Activated T-helper 2 cell treated with anti-CD3 and anti-CD28 coated beads, Interferon-gamma antibody, Interleukin-2, Interleukin-4, amounts not matched to agents 10 μg/mL and 5 μg/mL and 100 μg/mL, durations not matched to agents 14 hours and 24 hours and 36 hours (primary cell): ENCODE measurements at regions of chr2 and their contacts with region 1.

Region 1: DNA sequence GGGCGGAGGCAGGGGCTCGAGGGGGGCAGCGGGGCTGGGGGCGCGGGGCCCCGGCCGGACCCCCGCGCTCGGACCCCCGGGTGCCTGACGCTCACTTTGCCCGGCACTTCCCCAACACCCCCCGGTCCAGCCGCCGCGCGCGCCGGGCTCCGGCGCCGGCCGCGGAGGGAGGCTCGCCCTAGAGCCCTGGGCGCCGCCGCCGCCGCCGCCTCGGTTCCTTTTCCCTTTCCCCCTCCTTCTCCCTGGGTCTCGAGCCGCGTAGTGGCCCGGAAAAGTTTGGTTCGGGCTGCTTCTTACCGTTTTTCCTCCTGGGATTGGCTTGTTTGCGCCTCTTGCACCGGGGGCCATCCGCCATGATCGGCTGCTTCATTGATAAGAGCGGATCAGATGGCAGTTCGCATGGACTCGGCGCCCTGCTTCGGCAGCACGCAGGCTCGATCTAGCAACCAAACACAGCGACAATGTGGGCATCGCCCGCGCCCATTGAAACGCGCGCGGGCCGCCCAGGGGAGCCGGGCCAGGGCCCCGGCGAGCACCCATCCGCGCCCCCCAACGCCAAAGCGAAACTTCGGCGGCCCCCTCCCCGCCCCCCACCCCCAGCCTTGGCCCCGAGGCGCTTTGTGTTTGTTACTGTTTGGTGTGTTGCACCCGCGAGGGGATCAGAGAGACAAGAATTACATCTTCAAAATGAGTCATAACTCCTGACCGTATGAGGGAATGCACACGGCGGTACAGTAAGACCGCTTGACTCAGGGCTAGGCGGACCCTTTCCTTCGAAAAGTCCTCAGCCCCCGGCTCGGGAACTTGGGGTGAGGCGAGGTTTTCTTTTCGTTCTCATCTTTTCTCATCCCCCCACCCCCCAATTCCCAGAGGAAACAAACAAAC is 2.7 kb downstream of the ZEB2 start:
- DNase-seq: peak; percentile 57
- H3K4me3 Mint-ChIP-seq: no peak overlapping the region
- H3K27ac Mint-ChIP-seq: peak overlapping the region; percentile 99
- H3K4me1 Mint-ChIP-seq: peaks cover 25% of the 10 kb centered on the region
- H3K27me3 Mint-ChIP-seq: peaks cover 25% of the 10 kb centered on the region

Region 2: GRCh38 chr2:143885461-143885860 is 631.8 kb before region 1 on chr2:
- intact Hi-C with region 1: no loop called
- DNase-seq: no peak
- H3K4me3 Mint-ChIP-seq: no peak overlapping the region
- H3K27ac Mint-ChIP-seq: no peak overlapping the region
- H3K4me1 Mint-ChIP-seq: no peaks in the 10 kb centered on the region
- H3K27me3 Mint-ChIP-seq: peaks cover 4% of the 10 kb centered on the region

Region 3: GRCh38 chr2:144183727-144184126 is 333.5 kb before region 1 on chr2:
- intact Hi-C with region 1: loop called (anchors 1 kb)
- DNase-seq: peak; percentile 76
- H3K4me3 Mint-ChIP-seq: peak overlapping the region; percentile 44
- H3K27ac Mint-ChIP-seq: peak overlapping the region; percentile 94
- H3K4me1 Mint-ChIP-seq: peaks cover 56% of the 10 kb centered on the region
- H3K27me3 Mint-ChIP-seq: no peaks in the 10 kb centered on the region

Region 4: GRCh38 chr2:144256996-144257707 is 260.1 kb before region 1 on chr2:
- intact Hi-C with region 1: loop called (anchors 1 kb)
- DNase-seq: no peak
- H3K4me3 Mint-ChIP-seq: no peak overlapping the region
- H3K27ac Mint-ChIP-seq: peak overlapping the region; percentile 75
- H3K4me1 Mint-ChIP-seq: peaks cover 33% of the 10 kb centered on the region
- H3K27me3 Mint-ChIP-seq: no peaks in the 10 kb centered on the region

Region 5: DNA sequence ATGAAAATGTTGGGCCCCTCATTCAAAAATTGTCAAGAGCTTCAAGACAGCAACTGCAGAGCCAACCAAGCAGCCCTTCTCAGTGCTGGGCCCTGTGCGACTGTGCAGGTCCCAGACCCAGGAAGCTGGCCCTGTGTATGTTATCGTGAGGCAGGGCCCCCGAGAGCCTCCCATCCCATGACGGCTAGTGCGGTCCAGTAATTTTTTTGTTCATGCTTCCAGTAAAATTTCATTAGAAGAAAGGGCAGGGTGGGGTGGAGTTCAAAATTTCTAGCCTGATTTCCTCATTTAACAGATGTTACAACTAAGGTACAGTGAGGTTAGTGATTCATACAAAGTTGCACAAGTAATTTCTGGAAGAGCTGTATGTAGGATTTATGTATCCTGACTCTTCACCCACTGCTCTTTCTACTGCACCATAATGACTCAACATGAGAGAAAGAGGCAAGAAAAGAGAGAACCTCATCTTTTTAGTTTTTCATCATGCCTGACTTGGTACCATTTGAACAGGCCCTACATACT is 102.8 kb before region 1 on chr2:
- intact Hi-C with region 1: loop called (anchors 1 kb)
- DNase-seq: no peak
- H3K4me3 Mint-ChIP-seq: no peak overlapping the region
- H3K27ac Mint-ChIP-seq: peak overlapping the region; percentile 81
- H3K4me1 Mint-ChIP-seq: peaks cover 24% of the 10 kb centered on the region
- H3K27me3 Mint-ChIP-seq: no peaks in the 10 kb centered on the region

Region 6: DNA sequence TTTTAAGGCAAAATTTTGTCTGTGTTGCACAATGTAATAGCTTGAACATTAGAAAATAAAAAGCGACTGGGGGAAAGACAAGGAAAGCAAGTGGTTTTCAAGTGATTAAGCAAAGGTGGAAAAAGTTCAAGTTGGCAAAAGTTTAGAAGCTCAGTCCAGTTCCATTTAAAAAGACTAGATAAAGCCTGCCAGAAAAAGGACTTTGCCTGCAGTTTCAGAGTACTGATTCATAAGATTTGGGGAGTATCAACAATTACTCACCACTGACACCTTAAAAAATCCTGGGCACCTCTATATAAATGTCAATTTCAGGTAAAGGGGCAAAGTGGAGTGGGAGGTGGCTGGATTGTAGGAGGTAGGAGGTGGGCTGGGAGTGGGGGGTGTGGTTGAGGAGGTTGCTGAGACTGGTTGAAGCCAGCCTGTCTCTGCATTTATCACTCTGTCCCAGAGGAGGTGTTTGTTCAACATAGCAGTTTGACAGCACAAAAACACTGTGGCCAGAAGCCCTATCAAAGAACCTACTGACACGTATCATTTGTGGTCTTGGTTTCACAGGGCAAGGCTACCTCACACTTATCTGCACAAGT is 11.9 kb before region 1 on chr2:
- intact Hi-C with region 1: loop called (anchors 1 kb)
- DNase-seq: no peak
- H3K4me3 Mint-ChIP-seq: no peak overlapping the region
- H3K27ac Mint-ChIP-seq: peak overlapping the region; percentile 71
- H3K4me1 Mint-ChIP-seq: peaks cover 60% of the 10 kb centered on the region
- H3K27me3 Mint-ChIP-seq: peaks cover 7% of the 10 kb centered on the region